ENCODE measurements at regions of chr17 and their contacts with region 1.

Region 1: GRCh38 chr17:55709984-55710383 is 12.7 kb downstream of the TMEM100 start:
- DNase-seq: no peak

Region 2: GRCh38 chr17:55487695-55488429 is 222.1 kb before region 1 on chr17:
- intact Hi-C with region 1: no loop called
- DNase-seq: no peak

Region 3: GRCh38 chr17:55693254-55694216 is 16.4 kb before region 1 on chr17:
- intact Hi-C with region 1: loop called (anchors 1 kb)
- DNase-seq: no peak

Region 4: DNA sequence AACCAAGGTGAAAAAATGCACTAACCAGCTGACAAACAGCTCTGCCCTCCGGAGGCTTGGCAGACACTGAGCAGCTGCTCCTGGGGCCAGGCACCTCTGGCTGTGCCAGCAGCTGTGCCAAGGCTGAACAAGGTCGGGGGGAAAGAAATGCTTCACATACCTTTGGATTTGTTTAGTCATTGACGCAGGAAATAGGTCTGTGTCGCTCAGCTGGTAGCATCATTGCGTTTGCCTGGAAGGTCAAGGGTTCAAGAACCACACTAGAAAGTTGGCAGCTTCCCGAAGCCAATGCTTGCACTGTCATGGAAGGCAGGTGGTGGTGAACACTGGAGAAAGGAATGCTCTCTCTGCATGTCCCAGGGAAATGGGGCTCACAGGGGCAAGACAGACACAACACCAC is 104.4 kb after region 1 on chr17:
- intact Hi-C with region 1: no loop called
- DNase-seq: peak; percentile 75